PC-3 (cell line): ENCODE measurements at regions of chr20 and their contacts with region 1.

Region 1: DNA sequence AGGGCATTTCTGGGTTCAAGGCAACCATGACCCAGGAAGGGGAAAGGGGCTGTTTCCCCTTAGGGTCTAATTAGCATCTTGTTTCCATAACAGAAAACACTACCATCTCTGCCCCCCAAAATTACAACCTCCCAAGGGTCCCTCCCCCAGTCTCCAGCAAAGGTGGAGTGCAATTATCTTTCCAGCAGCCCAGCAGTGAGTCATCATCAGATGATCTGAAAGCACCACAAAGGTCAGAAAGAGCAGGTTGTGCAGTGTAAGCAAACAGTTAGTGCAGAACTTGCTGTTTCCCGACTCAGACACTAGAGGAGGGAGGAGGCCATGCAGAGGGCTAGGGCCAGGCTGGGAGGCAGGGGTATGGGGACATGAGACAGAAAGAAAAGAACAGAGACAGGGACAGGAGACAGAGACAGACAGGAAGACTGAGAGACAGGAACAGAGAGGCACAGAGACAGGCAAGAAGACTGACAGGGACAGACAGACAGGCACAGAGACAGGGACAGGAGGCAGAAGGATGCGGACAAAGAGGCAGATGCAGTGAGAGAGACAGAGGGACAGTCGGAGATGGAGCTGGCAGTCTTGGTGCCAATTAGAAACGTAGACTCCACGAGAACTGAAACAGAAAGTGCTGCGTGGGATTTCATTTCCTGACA is 62.5 kb downstream of the PYGB start:
- DNase-seq: peak; percentile 92
- ATAC-seq: peak; percentile 83
- H3K4me3 ChIP-seq: peak overlapping the region; percentile 55
- H3K27ac ChIP-seq: peak overlapping the region; percentile 93
- H3K4me1 ChIP-seq: peaks cover 38% of the 10 kb centered on the region
- H3K27me3 ChIP-seq: no peaks in the 10 kb centered on the region
- CTCF ChIP-seq: peak; percentile 82

Region 2: DNA sequence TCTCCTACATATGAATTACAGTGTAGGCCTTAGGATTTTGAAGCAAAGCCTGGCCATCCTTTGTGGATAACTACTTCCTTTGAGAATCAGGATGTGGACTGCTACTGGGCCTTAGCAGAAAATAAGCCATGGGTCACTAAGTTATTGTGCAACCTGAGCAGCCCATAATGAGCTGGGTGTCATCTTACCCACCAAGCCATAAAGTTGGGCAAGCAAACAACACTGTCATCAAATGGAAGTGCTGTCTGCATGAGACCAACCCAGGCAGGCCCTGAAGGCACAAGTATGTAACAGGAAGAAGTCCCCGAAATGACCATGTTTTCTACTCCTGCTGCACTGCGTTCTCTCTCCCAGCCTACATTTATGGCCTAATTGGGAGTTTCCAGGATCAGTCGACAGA is 1116.3 kb before region 1 on chr20:
- CTCF ChIA-PET with region 1: no interaction called
- POLR2A ChIA-PET with region 1: no interaction called
- intact Hi-C with region 1: no loop called
- DNase-seq: peak; percentile 92
- ATAC-seq: peak; percentile 51; the same call in 1 of the 2 replicates
- H3K4me3 ChIP-seq: no peak overlapping the region
- H3K27ac ChIP-seq: peak overlapping the region; percentile 61
- H3K4me1 ChIP-seq: peaks cover 18% of the 10 kb centered on the region
- H3K27me3 ChIP-seq: no peaks in the 10 kb centered on the region
- CTCF ChIP-seq: no peak

Region 3: GRCh38 chr20:25336561-25337422 is 26.4 kb after region 1 on chr20:
- CTCF ChIA-PET with region 1: interaction called, 4 read pairs
- POLR2A ChIA-PET with region 1: interaction called, 13 read pairs
- intact Hi-C with region 1: no loop called
- DNase-seq: peak; percentile 54
- ATAC-seq: peak; percentile 89
- H3K4me3 ChIP-seq: no peak overlapping the region
- H3K27ac ChIP-seq: no peak overlapping the region
- H3K4me1 ChIP-seq: no peaks in the 10 kb centered on the region
- H3K27me3 ChIP-seq: no peaks in the 10 kb centered on the region
- CTCF ChIP-seq: peak; percentile 74

Region 4: DNA sequence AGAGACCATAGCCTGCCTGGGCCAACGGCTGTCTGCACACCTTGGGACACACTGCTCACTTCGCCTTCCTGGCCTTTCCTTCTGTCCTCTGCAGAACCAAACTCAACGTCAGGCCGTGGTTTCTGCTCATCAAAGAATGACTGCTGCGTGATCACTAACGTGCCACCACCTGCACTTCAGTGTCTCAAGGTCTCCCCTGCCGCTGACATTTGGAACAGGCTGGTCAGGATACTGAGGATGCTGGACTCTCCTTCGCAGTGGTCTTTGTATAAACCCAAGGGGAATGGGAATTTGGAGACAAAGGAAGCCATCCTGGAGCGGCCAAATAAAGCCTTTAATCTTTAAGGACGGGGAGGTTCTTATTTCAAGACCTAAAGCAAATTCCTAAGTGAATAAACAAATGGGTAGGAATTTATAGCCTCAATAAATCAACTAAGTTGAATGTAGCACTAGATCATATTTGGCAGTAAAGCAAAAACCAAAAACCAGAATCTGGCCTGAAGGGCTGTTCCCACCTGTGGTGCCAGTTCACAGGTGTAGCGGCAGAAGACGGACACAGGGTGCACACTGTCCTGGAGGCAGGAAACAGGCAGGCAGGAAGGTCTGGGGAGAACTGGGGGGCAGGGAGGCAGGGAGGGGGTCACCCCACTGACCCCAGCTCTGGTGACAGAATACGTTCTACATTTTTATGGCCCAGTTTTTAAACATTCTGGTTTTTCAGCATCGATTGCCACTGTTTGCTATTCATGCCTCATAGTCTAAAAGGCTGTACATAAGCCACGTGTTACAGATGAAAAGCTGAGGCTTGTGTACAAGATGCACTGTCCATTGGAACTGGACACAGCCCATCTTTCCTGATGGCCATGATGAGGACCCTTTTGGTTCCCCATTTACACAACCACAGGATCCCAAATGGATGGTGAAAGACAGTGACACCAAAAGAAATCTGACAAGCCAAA is 43.6 kb after region 1 on chr20:
- CTCF ChIA-PET with region 1: no interaction called
- POLR2A ChIA-PET with region 1: interaction called, 3 read pairs
- intact Hi-C with region 1: loop called (anchors 5 kb)
- DNase-seq: peak; percentile 91
- ATAC-seq: peak; percentile 84
- H3K4me3 ChIP-seq: peak overlapping the region; percentile 17; the same call in 1 of the 2 replicates
- H3K27ac ChIP-seq: peak overlapping the region; percentile 57
- H3K4me1 ChIP-seq: peaks cover 27% of the 10 kb centered on the region
- H3K27me3 ChIP-seq: no peaks in the 10 kb centered on the region
- CTCF ChIP-seq: no peak

Region 5: GRCh38 chr20:25390538-25391528 is 80.4 kb after region 1 on chr20 and contains the start of gene ABHD12:
- CTCF ChIA-PET with region 1: interaction called, 3 read pairs
- POLR2A ChIA-PET with region 1: interaction called, 13 read pairs
- intact Hi-C with region 1: loop called (anchors 2 kb)
- DNase-seq: peak; percentile 98
- ATAC-seq: peak; percentile 87
- H3K4me3 ChIP-seq: peak within 1 kb of the TSS; percentile 98
- H3K27ac ChIP-seq: peak within 1 kb of the TSS; percentile 47
- H3K4me1 ChIP-seq: peaks cover 23% of the 10 kb centered on the region
- H3K27me3 ChIP-seq: no peaks in the 10 kb centered on the region
- CTCF ChIP-seq: no peak
- total RNA-seq, gene ABHD12: 48.3 and 64.2 TPM in 2 replicates

Region 6: GRCh38 chr20:25399037-25399430 is 88.6 kb after region 1 on chr20:
- CTCF ChIA-PET with region 1: interaction called, 18 read pairs
- POLR2A ChIA-PET with region 1: no interaction called
- intact Hi-C with region 1: loop called (anchors 1 kb)
- DNase-seq: peak; percentile 96
- ATAC-seq: peak; percentile 76
- H3K4me3 ChIP-seq: no peak overlapping the region
- H3K27ac ChIP-seq: no peak overlapping the region
- H3K4me1 ChIP-seq: peaks cover 30% of the 10 kb centered on the region
- H3K27me3 ChIP-seq: no peaks in the 10 kb centered on the region
- CTCF ChIP-seq: peak; percentile 87

Region 7: DNA sequence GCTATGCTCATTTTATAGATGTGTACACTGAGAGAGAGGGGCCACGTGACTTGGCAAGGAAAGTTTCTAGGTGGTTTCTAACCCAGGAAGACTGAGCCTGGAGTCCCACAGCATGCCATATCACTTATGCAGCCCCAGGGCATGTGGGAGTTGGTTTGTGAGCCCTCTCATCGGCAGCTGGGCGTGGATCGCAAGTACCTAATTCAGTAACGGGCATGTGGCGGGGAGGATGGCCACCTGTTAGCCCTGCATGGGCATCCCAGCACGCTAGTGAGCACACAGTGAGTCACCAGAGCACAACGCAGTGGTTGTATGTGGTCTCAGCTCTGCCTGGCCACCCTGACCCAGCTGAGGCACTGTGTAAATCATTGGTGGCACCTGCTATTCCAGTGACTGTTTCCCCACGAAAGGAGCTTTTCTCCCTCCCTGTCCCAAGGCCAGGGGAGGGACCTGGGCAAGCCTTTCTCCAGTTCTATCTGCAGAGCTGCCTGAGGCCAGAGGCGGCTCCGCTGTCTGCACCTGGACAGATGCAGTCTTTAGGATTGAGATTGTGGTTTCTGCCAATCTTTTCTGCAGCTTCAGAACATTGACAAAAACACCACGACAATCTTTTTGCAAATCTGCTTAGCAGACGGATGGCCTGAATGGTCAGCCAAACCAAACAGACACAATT is 186.7 kb after region 1 on chr20:
- CTCF ChIA-PET with region 1: interaction called, 11 read pairs
- POLR2A ChIA-PET with region 1: no interaction called
- intact Hi-C with region 1: no loop called
- DNase-seq: peak; percentile 100
- ATAC-seq: peak; percentile 99
- H3K4me3 ChIP-seq: no peak overlapping the region
- H3K27ac ChIP-seq: peak overlapping the region; percentile 43
- H3K4me1 ChIP-seq: peaks cover 20% of the 10 kb centered on the region
- H3K27me3 ChIP-seq: no peaks in the 10 kb centered on the region
- CTCF ChIP-seq: 0 out of 2 replicates have a peak, but pooled peaks have one; percentile 10